Psoas muscle (tissue), 8 donors: ENCODE measurements at regions of chr22 and their contacts with region 1.

Region 1: GRCh38 chr22:40067639-40068038 is 72.9 kb downstream of the FAM83F start:
- DNase-seq: no peak
- ATAC-seq: no peak
- H3K4me3 ChIP-seq: no peak overlapping the region
- H3K27ac ChIP-seq: peak overlapping the region; percentile 17
- H3K4me1 ChIP-seq: peaks cover 64% of the 10 kb centered on the region
- H3K27me3 ChIP-seq: no peaks in the 10 kb centered on the region
- CTCF ChIP-seq: no peak

Region 2: GRCh38 chr22:39997939-39998338 is 69.7 kb before region 1 on chr22:
- intact Hi-C with region 1: no loop called
- DNase-seq: no peak
- ATAC-seq: no peak
- H3K4me3 ChIP-seq: no peak overlapping the region
- H3K27ac ChIP-seq: no peak overlapping the region
- H3K4me1 ChIP-seq: no peaks in the 10 kb centered on the region
- H3K27me3 ChIP-seq: peaks cover 0 to 47% (median 8%) of the 10 kb centered on the region in 3 donors
- CTCF ChIP-seq: no peak

Region 3: DNA sequence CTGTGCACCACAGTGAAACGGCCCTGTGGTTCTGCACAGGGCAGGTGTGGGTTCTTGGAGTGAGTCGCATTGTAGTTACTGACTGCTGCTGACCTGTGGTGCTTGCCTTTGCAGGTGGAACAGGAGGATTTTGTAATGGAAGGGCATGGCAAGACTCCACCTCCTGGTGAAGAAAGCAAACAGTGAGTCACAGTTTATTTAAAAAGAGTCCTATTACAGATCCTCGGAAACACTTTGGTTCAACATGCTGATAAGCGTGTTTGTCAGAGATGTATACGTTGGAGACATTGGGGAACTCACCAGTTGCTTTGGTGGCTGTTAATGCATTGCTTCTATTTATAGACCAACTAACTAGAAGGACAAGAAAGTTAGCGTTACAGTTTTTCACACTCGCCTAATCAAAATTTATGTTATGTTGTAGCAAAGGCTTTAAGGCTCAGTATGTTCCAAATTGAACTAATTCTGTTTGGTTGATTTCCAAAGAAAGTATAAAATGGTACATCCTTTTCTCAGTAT is 88.4 kb after region 1 on chr22:
- intact Hi-C with region 1: loop called in 1 of 2 experiments (anchors 10 kb)
- DNase-seq: peak in 1 of 2 donors; percentile 21
- ATAC-seq: peak; percentile 96 to 98 (median 97)
- H3K4me3 ChIP-seq: peak overlapping the region; percentile 2
- H3K27ac ChIP-seq: peak overlapping the region; percentile 68
- H3K4me1 ChIP-seq: peaks cover 20% of the 10 kb centered on the region
- H3K27me3 ChIP-seq: no peaks in the 10 kb centered on the region
- CTCF ChIP-seq: peak; percentile 21